Right ventricle myocardium superior (tissue), 1 donor: ENCODE measurements at regions of chr2 and their contacts with region 1.

Region 1: GRCh38 chr2:96868555-96869280 is 1.2 kb downstream of the SEMA4C start:
- DNase-seq: peak; percentile 93
- ATAC-seq: peak; percentile 68

Region 2: DNA sequence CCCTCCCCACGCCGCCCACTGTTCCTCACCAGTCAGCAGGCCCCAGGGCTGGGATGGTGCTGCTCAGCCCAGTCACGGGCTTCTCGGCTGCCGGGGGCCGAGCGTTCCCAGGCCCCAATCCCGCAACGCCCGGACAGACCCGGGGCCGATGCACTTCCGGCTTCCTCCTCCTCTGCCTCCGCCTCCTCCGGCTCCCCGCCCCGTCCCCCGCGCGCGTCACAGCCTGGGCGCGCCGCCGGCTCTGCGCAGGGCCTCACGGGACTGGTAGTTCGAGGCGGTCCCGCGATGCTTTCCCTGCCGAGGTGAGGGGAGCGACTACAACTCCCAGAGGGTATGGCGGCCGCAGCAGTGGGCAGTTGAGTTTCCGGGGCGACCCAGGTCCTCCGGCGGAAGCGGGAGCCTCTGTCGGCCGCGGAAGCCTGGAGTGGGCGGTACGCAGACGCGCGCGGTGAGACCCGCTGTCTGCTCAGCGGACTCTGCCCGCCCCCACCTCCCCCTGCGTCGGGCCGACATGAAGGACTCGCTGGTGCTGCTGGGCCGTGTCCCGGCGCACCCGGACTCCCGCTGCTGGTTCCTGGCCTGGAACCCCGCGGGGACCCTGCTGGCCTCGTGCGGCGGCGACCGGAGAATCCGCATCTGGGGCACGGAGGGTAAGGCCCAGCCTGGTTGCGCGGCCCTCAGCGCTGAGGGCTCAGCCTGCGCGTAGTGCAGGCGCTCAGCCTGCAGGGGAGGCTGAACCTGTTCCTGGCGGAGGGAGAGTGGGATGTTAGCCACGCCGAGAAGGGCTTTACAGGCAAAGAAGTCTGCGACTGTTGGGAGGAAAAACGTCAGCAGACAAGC is 602.7 kb before region 1 on chr2 and contains the starts of genes CIAO1 and TMEM127:
- intact Hi-C with region 1: no loop called
- DNase-seq: peak; percentile 99
- ATAC-seq: peak; percentile 95
- total RNA-seq, gene CIAO1: 62.3 TPM
- total RNA-seq, gene TMEM127: 67.3 TPM

Region 3: GRCh38 chr2:96907115-96908041 is 38.7 kb after region 1 on chr2:
- intact Hi-C with region 1: loop called (anchors 2 kb)
- DNase-seq: peak; percentile 92
- ATAC-seq: peak; percentile 92